Motor neuron (in vitro differentiated cells): ENCODE measurements at regions of chr2 and their contacts with region 1.

Region 1: DNA sequence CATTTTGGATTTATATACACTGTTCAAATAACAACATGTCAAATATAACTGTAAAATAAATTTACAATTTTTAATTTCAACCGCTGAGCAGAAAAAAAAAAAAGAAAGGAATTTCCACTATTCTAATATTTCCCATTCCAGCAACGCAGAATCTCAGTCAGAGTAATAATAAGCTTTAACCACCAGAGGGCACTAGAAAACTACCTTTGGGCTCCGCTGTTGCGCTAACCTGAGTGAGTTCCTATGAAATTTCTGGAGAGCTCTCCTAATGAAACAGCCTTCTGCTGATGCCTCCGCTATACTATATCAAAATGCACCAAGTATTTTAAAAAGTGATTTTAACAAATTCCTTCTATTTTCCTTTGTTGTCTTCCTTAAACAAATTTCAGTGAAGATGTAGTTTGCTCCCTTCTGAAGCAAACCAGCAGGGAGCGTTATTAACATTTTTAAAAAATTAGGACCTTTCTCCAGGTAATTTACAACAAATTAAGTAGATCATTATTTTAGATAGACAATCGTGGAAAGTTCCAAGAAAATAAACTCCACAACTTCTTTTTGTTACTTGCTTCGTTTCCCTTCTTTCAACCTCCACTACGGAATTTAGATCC is 23.0 kb downstream of the ERMN start:
- ATAC-seq: peak; percentile 52 to 80 (median 67)
- H3K4me3 ChIP-seq: no peak overlapping the region
- H3K27ac ChIP-seq: no peak overlapping the region
- H3K4me1 ChIP-seq: peaks cover 2 to 11% of the 10 kb centered on the region in 2 donors

Region 2: GRCh38 chr2:157596992-157597681 is 294.5 kb after region 1 on chr2:
- in situ Hi-C with region 1: loop called in 1 of 9 experiments (anchors 25 kb)
- ATAC-seq: peak in 3 of 8 experiments; percentile 57 to 78 (median 78)
- H3K4me3 ChIP-seq: no peak overlapping the region
- H3K27ac ChIP-seq: no peak overlapping the region
- H3K4me1 ChIP-seq: no peaks in the 10 kb centered on the region